SK-MEL-5 (cell line): ENCODE measurements at regions of chrX and their contacts with region 1.

Region 1: GRCh38 chrX:132776486-132777210 is 181.8 kb downstream of the HS6ST2 start:
- DNase-seq: no peak

Region 2: GRCh38 chrX:132671229-132671641 is 105.4 kb before region 1 on chrX:
- in situ Hi-C with region 1: no loop called
- DNase-seq: no peak

Region 3: DNA sequence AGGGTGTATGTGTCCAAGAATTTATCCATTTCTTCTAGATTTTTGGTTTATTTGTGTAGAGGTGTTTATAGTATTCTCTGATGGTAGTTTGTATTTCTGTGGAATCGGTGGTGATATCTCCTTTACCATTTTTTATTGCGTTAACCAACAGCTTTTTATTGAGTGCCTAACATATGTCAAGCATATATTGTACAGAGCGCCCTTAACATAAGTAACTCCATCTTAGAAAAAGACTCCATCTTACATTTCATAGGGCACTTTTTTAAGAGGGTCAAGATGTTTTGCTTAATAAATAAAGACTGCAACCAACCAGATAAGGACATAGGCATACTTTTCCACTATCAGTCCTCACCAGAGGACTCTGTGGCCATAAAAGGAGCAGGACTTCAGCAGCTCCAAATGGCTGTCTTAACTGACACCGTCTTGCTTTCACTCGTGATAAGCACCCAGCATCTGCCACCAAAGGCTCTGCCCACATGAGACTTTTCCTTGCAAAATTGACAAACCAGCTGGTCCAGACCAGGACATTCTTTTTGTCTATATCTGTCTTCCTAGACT is 106.8 kb after region 1 on chrX:
- in situ Hi-C with region 1: no loop called
- DNase-seq: no peak

Region 4: GRCh38 chrX:132909643-132910042 is 133.0 kb after region 1 on chrX:
- in situ Hi-C with region 1: loop called (anchors 25 kb)
- DNase-seq: no peak